ENCODE measurements at regions of chr4 and their contacts with region 1.

Region 1: GRCh38 chr4:6200011-6200921 is at the start of gene JAKMIP1:
- DNase-seq: peak; percentile 82 to 92 (median 88)
- H3K4me3 ChIP-seq: peak within 1 kb of the TSS; percentile 54 to 86 (median 72)
- H3K27ac ChIP-seq: peak within 1 kb of the TSS in 43 of 59 donors; percentile 3 to 88 (median 66)
- H3K27me3 ChIP-seq: peaks cover 0 to 12% (median 0%) of the 10 kb centered on the region in 45 donors
- CTCF ChIP-seq: peak in 3 of 56 donors; percentile 7 to 29 (median 24)
- total RNA-seq, gene JAKMIP1: 18.9 to 84.4 (median 55.8) TPM

Region 2: GRCh38 chr4:5839751-5840674 is 360.3 kb before region 1 on chr4:
- intact Hi-C with region 1: no loop called
- DNase-seq: peak in 4 of 10 donors; percentile 10 to 62 (median 42)
- H3K4me3 ChIP-seq: peak overlapping the region in 2 of 59 donors; percentile 3 to 6
- H3K27ac ChIP-seq: peak overlapping the region in 21 of 59 donors; percentile 1 to 53 (median 34)
- H3K27me3 ChIP-seq: no peaks in the 10 kb centered on the region
- CTCF ChIP-seq: no peak

Region 3: DNA sequence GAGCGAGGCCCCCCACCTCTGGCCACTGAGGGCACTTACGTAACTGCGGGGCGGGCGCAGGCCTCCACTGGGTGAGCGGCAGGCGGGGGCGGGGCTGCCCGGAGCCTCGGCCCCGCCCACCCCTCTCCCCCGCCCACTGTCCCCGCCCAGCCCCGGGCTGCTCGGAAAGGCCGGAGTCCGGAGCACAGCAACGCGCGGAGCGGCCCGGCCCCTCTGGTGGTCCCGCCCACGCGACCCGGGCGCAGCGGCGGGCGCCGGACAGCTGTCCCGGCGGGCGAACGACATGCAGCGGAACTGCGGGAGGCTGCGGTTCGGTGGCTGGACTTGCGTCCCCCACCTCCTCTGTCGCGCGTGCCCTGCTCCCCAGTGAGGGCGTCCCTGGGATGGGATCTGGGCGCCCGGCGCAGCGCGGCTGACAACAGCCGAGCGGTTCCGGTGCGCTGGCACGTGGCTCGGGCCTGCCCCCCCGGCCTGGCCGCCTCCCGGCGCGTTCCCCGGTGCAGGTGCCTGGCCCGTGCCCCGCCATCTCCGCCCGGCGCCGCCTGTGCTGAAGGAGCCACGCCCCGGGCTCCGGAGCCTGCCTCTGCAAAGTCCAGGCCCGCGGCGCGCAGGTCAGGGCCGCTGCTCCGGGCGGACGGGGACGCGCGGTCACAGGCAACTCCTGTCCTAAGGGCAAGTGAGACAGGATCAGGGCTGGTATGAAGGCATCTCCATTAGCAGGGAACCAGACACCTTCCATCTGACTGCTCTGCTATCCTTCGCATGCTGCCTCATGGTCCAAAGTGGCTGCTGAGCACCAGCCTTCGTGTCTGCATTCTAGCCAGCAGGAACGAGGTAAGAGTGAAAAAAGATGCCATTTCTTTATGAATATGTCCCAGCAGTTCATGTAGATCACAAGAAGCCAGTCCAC is 21.8 kb after region 1 on chr4:
- intact Hi-C with region 1: loop called in 1 of 2 experiments (anchors 1 kb)
- DNase-seq: peak; percentile 65 to 88 (median 80)
- H3K4me3 ChIP-seq: peak overlapping the region; percentile 23 to 73 (median 57)
- H3K27ac ChIP-seq: peak overlapping the region in 30 of 59 donors; percentile 18 to 85 (median 56)
- H3K27me3 ChIP-seq: peaks cover 0 to 7% (median 0%) of the 10 kb centered on the region in 45 donors
- CTCF ChIP-seq: peak in 6 of 56 donors; percentile 10 to 28 (median 18)